CD4-positive, alpha-beta T cell (primary cell): ENCODE measurements at regions of chr5 and their contacts with region 1.

Region 1: GRCh38 chr5:34838785-34839714 is at the start of gene TTC23L:
- DNase-seq: peak; percentile 84 to 98 (median 87)
- ATAC-seq: peak; percentile 89
- H3K4me3 ChIP-seq: peak within 1 kb of the TSS; percentile 78
- H3K4me3 Mint-ChIP-seq: peak within 1 kb of the TSS; percentile 95
- H3K27ac ChIP-seq: peak within 1 kb of the TSS; percentile 63 to 76
- H3K27ac Mint-ChIP-seq: peak within 1 kb of the TSS; percentile 88
- H3K4me1 ChIP-seq: peaks cover 16% of the 10 kb centered on the region
- H3K4me1 Mint-ChIP-seq: peaks cover 17% of the 10 kb centered on the region
- H3K27me3 ChIP-seq: no peaks in the 10 kb centered on the region
- H3K27me3 Mint-ChIP-seq: peaks cover 8% of the 10 kb centered on the region
- CTCF ChIP-seq: no peak
- total RNA-seq, gene TTC23L: 0.20 TPM in 1 of 2 experiments, not detected in the other

Region 2: GRCh38 chr5:34801949-34802348 is 37.1 kb before region 1 on chr5:
- CTCF ChIA-PET with region 1: no interaction called
- POLR2A ChIA-PET with region 1: no interaction called
- intact Hi-C with region 1: no loop called
- DNase-seq: no peak
- ATAC-seq: no peak
- H3K4me3 ChIP-seq: no peak overlapping the region
- H3K4me3 Mint-ChIP-seq: no peak overlapping the region
- H3K27ac ChIP-seq: no peak overlapping the region
- H3K27ac Mint-ChIP-seq: no peak overlapping the region
- H3K4me1 ChIP-seq: no peaks in the 10 kb centered on the region
- H3K4me1 Mint-ChIP-seq: no peaks in the 10 kb centered on the region
- H3K27me3 ChIP-seq: no peaks in the 10 kb centered on the region
- H3K27me3 Mint-ChIP-seq: no peaks in the 10 kb centered on the region
- CTCF ChIP-seq: no peak

Region 3: GRCh38 chr5:34915139-34915855 is 76.2 kb after region 1 on chr5 and contains the starts of genes BRIX1 and RAD1:
- CTCF ChIA-PET with region 1: interaction called, 4 read pairs
- POLR2A ChIA-PET with region 1: interaction called, 29 read pairs
- intact Hi-C with region 1: loop called (anchors 1 to 2 kb)
- DNase-seq: peak; percentile 87 to 97 (median 90)
- ATAC-seq: peak; percentile 96
- H3K4me3 ChIP-seq: peak within 1 kb of the TSS; percentile 91
- H3K4me3 Mint-ChIP-seq: peak within 1 kb of the TSS; percentile 77
- H3K27ac ChIP-seq: peak within 1 kb of the TSS; percentile 84 to 88
- H3K27ac Mint-ChIP-seq: no peak within 1 kb of the TSS
- H3K4me1 ChIP-seq: peaks cover 27% of the 10 kb centered on the region
- H3K4me1 Mint-ChIP-seq: peaks cover 35% of the 10 kb centered on the region
- H3K27me3 ChIP-seq: no peaks in the 10 kb centered on the region
- H3K27me3 Mint-ChIP-seq: no peaks in the 10 kb centered on the region
- CTCF ChIP-seq: no peak
- total RNA-seq, gene BRIX1: 29.7 to 30.2 TPM
- total RNA-seq, gene RAD1: 26.7 to 29.2 TPM